ENCODE measurements at regions of chr16 and their contacts with region 1.

Region 1: GRCh38 chr16:84138824-84139627 is 6.0 kb downstream of the HSDL1 start:
- DNase-seq: no peak
- H3K4me3 ChIP-seq: no peak overlapping the region
- H3K27ac ChIP-seq: no peak overlapping the region
- H3K4me1 ChIP-seq: peaks cover under 1% of the 10 kb centered on the region
- H3K27me3 ChIP-seq: no peaks in the 10 kb centered on the region
- CTCF ChIP-seq: no peak

Region 2: GRCh38 chr16:84239141-84239769 is 100.2 kb after region 1 on chr16:
- CTCF ChIA-PET with region 1: no interaction called
- dilution Hi-C with region 1: loop called (anchors 5 kb)
- in situ Hi-C with region 1: no loop called
- intact Hi-C with region 1: no loop called
- DNase-seq: no peak
- H3K4me3 ChIP-seq: no peak overlapping the region
- H3K27ac ChIP-seq: no peak overlapping the region
- H3K4me1 ChIP-seq: no peaks in the 10 kb centered on the region
- H3K27me3 ChIP-seq: peaks cover 9% of the 10 kb centered on the region
- CTCF ChIP-seq: no peak